HepG2 (cell line): ENCODE measurements at regions of chr15 and their contacts with region 1.

Region 1: GRCh38 chr15:74438721-74439316 is 5.1 kb upstream of the SEMA7A start:
- DNase-seq: peak; percentile 69
- ATAC-seq: 0 out of 3 replicates have a peak, but pooled peaks have one; percentile 7
- H3K4me3 ChIP-seq: no peak overlapping the region
- H3K27ac ChIP-seq: no peak overlapping the region
- H3K4me1 ChIP-seq: peaks cover 76% of the 10 kb centered on the region
- H3K27me3 ChIP-seq: no peaks in the 10 kb centered on the region
- CTCF ChIP-seq: peak; percentile 97
- EP300 ChIP-seq: no peak
- POLR2A ChIP-seq: no peak
- RAD21 ChIP-seq: peak; percentile 92

Region 2: DNA sequence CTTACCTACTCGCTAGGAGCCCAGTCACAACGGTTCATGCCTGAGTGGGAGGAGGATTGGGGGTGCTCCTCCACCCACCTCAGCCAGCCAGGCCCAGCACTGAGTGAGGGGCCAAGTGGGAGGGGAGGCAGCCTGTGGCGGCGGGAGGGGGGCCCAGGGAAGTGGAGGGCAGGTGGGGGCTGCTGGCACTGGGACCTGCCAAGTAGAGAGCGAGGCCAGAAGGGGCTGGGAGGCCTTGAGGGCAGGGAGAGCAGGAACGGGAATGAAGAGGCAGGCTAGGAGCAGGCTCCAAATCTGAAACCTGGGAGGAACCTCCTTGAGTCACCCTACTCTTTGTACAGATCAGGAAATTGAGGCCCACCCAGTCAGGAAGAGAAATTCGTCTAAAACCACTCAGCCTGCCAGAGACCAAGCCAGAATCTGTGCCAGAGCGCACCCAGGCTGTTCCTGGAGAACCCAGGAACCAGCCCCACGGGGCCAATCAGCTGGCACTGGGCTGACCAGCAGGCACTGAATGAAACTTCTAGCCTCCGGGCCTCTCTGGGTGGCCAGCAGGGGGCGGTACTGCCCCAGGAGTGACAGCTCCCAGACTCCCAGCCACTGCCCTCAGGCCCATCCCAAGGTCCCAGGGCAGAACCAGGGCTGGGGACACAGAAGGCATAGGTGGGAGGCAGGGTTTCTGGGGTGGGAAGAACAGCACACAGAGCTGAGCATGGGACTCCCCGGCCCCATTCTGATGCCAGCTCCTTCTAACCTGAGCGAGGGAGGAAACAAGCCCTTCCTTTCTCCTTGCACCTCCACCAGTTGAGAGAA is 56.6 kb before region 1 on chr15:
- CTCF ChIA-PET with region 1: interaction called, 77 read pairs
- POLR2A ChIA-PET with region 1: interaction called, 124 read pairs
- in situ Hi-C with region 1: loop called (anchors 5 kb)
- intact Hi-C with region 1: loop called (anchors 1 kb)
- DNase-seq: peak; percentile 74
- ATAC-seq: peak; percentile 92
- H3K4me3 ChIP-seq: peak overlapping the region in 2 of 3 experiments; percentile 26 to 53; a peak in 2 of 6 replicates
- H3K27ac ChIP-seq: no peak overlapping the region
- H3K4me1 ChIP-seq: peaks cover 66% of the 10 kb centered on the region
- H3K27me3 ChIP-seq: peaks cover 0 to 19% of the 10 kb centered on the region in 2 experiments; a peak in 3 of 5 replicates
- CTCF ChIP-seq: peak; percentile 98
- EP300 ChIP-seq: no peak
- POLR2A ChIP-seq: no peak
- RAD21 ChIP-seq: peak; percentile 99

Region 3: GRCh38 chr15:74407055-74407691 is 31.6 kb before region 1 on chr15:
- CTCF ChIA-PET with region 1: no interaction called
- POLR2A ChIA-PET with region 1: interaction called, 18 read pairs
- in situ Hi-C with region 1: no loop called
- intact Hi-C with region 1: no loop called
- DNase-seq: peak; percentile 22
- ATAC-seq: peak; percentile 72
- H3K4me3 ChIP-seq: no peak overlapping the region; a peak in 1 of 6 replicates
- H3K27ac ChIP-seq: no peak overlapping the region
- H3K4me1 ChIP-seq: peaks cover 45% of the 10 kb centered on the region
- H3K27me3 ChIP-seq: peaks cover 6 to 21% of the 10 kb centered on the region in 2 experiments
- CTCF ChIP-seq: no peak
- EP300 ChIP-seq: no peak
- POLR2A ChIP-seq: no peak
- RAD21 ChIP-seq: no peak

Region 4: DNA sequence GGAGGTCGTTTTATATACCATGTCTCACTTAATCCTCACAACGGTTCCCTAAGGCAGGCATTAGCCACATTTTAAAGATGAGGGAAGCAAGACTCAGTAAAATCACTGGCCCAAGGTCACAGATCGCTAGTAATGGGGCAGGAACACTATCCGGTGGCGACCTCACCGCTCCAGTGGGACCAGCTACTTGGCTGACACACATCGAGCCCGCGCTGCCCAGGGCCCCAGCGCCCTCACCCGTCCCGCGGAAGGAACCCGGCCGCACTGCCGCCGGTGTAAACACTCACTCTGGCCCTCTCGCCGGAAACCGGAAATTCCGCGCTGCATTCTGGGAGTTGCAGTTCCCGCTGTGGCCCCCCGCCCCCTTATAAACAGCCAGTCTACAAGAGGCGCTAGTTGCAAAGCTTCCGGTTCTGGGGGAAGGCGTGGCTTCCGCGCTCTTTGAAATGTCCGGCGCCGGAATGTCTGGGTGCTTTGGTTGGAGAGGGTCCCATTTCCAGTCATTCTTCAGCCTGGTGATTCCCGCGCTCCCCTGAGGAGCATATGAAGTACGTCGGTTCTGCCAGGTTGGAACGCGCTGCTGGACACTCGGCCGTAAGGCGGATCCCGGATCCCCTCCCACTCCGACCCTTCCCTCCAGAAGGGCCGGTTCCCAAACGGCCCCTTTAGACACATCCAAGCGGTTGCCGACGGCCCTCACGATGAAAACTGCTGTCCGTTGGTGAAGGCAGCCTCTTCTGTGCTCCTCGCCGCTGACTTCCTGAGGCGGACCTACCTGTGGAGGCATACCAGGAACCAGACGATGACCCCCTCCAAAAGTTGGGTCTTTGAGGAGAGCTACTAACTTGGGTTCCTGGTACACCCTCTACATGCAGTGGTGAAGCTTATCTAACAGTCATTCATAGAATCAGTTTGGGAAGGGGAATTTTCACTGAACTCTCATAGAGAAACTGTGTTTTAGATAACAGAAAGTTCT is 22.3 kb after region 1 on chr15 and contains the start of gene UBL7:
- CTCF ChIA-PET with region 1: interaction called, 4 read pairs
- POLR2A ChIA-PET with region 1: interaction called, 357 read pairs
- in situ Hi-C with region 1: no loop called
- intact Hi-C with region 1: loop called (anchors 1 kb)
- DNase-seq: peak; percentile 98
- ATAC-seq: peak; percentile 96
- H3K4me3 ChIP-seq: peak within 1 kb of the TSS; percentile 81 to 88 (median 86)
- H3K27ac ChIP-seq: peak within 1 kb of the TSS; percentile 97
- H3K4me1 ChIP-seq: peaks cover 43% of the 10 kb centered on the region
- H3K27me3 ChIP-seq: no peaks in the 10 kb centered on the region
- CTCF ChIP-seq: peak; percentile 89
- EP300 ChIP-seq: 0 out of 4 replicates have a peak, but pooled peaks of 1 of the 2 experiments have one; percentile 57
- POLR2A ChIP-seq: peak; percentile 91
- RAD21 ChIP-seq: peak; percentile 88
- total RNA-seq, gene UBL7: 55.0 and 63.2 TPM in 2 replicates

Region 5: DNA sequence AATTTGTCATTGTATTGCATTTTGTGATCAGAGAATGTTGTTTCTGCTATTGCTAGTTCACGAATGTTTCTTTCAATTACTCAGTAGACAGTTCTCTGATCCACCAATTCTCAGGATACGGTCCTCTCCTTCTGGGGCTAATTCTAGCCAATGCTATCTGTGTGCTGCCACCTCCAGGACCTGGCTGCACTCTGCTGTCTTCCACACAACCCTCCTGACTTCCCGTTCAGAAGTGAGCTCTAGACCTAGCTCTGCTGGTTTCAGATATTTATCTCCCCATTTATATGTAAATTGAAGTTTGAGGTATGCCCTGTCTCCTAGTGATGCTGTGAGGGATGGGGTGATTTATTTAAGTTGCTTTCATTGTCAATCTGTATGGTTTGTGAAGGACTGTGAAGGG is 43.8 kb after region 1 on chr15:
- CTCF ChIA-PET with region 1: no interaction called
- POLR2A ChIA-PET with region 1: interaction called, 17 read pairs
- in situ Hi-C with region 1: no loop called
- intact Hi-C with region 1: no loop called
- DNase-seq: peak; percentile 24
- ATAC-seq: peak; percentile 84
- H3K4me3 ChIP-seq: no peak overlapping the region
- H3K27ac ChIP-seq: no peak overlapping the region
- H3K4me1 ChIP-seq: no peaks in the 10 kb centered on the region
- H3K27me3 ChIP-seq: no peaks in the 10 kb centered on the region
- CTCF ChIP-seq: peak; percentile 51
- EP300 ChIP-seq: no peak
- POLR2A ChIP-seq: no peak
- RAD21 ChIP-seq: no peak; the same call in 1 of the 2 replicates

Region 6: DNA sequence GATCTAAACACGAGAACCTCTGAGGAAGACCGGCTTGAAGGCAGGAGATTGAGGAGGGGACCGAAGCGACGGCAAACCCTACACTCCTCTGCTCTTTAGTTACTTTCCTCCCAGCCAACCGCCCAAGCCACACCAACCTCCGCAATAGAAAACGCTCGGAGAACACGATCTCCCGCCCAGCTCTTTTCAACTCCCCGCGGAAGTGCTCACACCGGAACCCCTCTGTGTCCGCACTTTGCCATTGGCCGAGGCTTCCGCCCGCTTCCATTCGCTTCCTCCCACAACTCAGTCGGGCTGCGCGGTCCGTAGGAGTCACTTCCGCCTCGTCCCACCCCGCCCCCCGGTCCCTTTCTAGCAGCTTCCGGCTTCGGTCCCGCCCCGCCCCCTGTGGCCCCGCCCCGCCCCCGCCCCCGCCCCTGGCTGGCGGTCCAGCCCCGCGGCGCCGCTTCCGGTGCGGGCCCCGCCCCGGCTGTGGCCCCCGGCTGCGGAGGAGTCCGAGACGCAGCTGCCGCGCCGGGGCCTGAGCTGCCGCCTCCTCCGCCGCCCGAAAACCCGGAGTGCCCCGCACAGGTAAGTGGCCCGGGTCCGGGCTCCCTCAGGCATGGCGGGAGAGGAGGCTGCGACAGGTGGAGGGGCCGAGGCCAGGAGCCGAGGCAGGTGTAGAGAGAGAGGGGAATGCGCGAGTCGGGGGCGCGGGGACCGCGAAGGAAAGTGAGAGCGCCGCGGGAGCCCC is 102.1 kb after region 1 on chr15 and contains the start of gene ARID3B:
- CTCF ChIA-PET with region 1: no interaction called
- POLR2A ChIA-PET with region 1: interaction called, 13 read pairs
- in situ Hi-C with region 1: no loop called
- intact Hi-C with region 1: no loop called
- DNase-seq: peak; percentile 94
- ATAC-seq: peak; percentile 99
- H3K4me3 ChIP-seq: peak within 1 kb of the TSS; percentile 97 to 99 (median 98)
- H3K27ac ChIP-seq: peak within 1 kb of the TSS; percentile 80
- H3K4me1 ChIP-seq: peaks cover 37% of the 10 kb centered on the region
- H3K27me3 ChIP-seq: no peaks in the 10 kb centered on the region; a peak in 1 of 5 replicates
- CTCF ChIP-seq: no peak
- EP300 ChIP-seq: no peak
- POLR2A ChIP-seq: peak; percentile 68 to 92
- RAD21 ChIP-seq: peak; percentile 6; the same call in 1 of the 2 replicates
- total RNA-seq, gene ARID3B: 5.3 and 7.0 TPM in 2 replicates

Region 7: DNA sequence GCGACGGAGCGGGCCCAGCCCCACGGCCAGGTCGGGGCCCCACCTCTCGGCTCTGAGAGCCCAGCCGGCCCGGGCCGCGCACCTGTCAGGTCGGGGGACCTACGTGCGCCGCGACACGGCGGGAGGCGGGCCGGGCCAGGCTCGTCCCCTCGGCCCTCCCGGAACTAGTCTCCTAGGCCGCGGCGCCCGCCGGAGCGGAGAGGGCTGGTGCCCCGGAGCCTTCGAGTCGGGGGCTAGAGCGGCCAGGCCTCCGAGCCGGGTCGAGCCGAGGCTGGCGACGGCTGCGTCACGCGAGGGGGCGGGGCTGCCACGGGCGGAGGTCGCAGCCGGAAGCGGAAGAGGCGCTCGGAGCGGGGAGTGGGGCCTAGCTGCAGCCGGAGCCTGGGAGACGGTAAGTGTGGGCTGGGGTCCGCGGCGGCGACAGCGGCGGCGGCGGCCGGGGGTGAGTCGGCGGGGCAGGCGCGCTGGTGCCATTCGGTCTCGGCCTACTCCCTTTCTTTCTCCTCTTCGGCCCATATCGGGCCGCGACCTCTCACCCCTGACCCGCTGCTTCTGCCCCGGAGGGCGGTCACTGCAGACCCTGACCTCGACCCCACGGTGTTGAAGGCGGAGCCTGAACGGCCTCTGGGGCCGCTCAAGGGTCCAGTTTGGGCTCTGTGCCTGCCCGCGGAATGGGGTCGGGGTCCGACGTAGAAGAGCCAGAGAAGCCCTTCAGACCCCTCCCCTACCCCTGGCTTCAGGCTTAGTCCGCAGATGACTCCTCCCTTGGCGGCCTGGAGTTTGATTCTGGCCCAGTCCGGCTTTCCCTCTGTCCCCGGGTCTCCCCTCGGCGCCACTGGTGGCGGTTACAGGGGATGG is 176.9 kb after region 1 on chr15 and contains the start of gene CLK3:
- CTCF ChIA-PET with region 1: no interaction called
- POLR2A ChIA-PET with region 1: interaction called, 9 read pairs
- in situ Hi-C with region 1: no loop called
- intact Hi-C with region 1: loop called (anchors 5 kb)
- DNase-seq: peak; percentile 85
- ATAC-seq: peak; percentile 87
- H3K4me3 ChIP-seq: peak within 1 kb of the TSS; percentile 90 to 100 (median 94)
- H3K27ac ChIP-seq: peak within 1 kb of the TSS; percentile 93
- H3K4me1 ChIP-seq: peaks cover 39% of the 10 kb centered on the region
- H3K27me3 ChIP-seq: peaks cover 0 to 20% of the 10 kb centered on the region in 2 experiments; a peak in 2 of 5 replicates
- CTCF ChIP-seq: peak; percentile 12; the same call in 1 of the 2 replicates
- EP300 ChIP-seq: peak; percentile 9 to 51; a peak in 2 of 4 replicates
- POLR2A ChIP-seq: no peak; a peak in 1 of 4 replicates
- RAD21 ChIP-seq: peak; percentile 58
- total RNA-seq, gene CLK3: 31.4 and 41.5 TPM in 2 replicates

Region 8: GRCh38 chr15:75523011-75523410 is 1084.2 kb after region 1 on chr15:
- CTCF ChIA-PET with region 1: no interaction called
- POLR2A ChIA-PET with region 1: no interaction called
- in situ Hi-C with region 1: no loop called
- intact Hi-C with region 1: no loop called
- DNase-seq: no peak
- ATAC-seq: no peak
- H3K4me3 ChIP-seq: no peak overlapping the region
- H3K27ac ChIP-seq: no peak overlapping the region
- H3K4me1 ChIP-seq: no peaks in the 10 kb centered on the region
- H3K27me3 ChIP-seq: no peaks in the 10 kb centered on the region
- CTCF ChIP-seq: no peak
- EP300 ChIP-seq: no peak
- POLR2A ChIP-seq: no peak
- RAD21 ChIP-seq: no peak